ENCODE measurements at regions of chr7 and their contacts with region 1.

Region 1: DNA sequence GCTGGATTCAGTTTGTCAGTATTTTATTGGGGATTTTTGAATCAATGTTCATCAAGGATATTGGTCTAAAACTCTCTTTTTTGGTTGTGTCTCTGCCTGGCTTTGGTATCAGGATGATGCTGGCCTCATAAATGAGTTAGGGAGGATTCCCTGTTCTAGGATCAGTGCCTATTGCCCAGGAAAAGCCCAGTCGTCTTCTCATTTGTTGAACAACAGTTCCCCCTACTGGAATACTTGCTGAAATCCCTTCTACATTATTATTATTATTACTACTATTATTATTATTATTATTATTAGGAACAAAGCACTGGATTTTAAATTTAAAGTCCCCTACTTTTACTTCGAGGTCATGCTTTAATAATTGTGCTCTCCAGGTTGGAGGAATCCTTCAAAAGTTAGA is 528.9 kb downstream of the MAGI2 start:
- DNase-seq: no peak
- H3K4me3 ChIP-seq: no peak overlapping the region
- H3K27ac ChIP-seq: no peak overlapping the region
- H3K4me1 ChIP-seq: no peaks in the 10 kb centered on the region
- CTCF ChIP-seq: peak; percentile 40; the same call in 1 of the 2 replicates

Region 2: GRCh38 chr7:77995717-77996116 is 928.9 kb before region 1 on chr7:
- CTCF ChIA-PET with region 1: no interaction called
- POLR2A ChIA-PET with region 1: no interaction called
- intact Hi-C with region 1: no loop called
- DNase-seq: peak; percentile 14
- H3K4me3 ChIP-seq: no peak overlapping the region
- H3K27ac ChIP-seq: no peak overlapping the region
- H3K4me1 ChIP-seq: no peaks in the 10 kb centered on the region
- CTCF ChIP-seq: peak; percentile 55

Region 3: DNA sequence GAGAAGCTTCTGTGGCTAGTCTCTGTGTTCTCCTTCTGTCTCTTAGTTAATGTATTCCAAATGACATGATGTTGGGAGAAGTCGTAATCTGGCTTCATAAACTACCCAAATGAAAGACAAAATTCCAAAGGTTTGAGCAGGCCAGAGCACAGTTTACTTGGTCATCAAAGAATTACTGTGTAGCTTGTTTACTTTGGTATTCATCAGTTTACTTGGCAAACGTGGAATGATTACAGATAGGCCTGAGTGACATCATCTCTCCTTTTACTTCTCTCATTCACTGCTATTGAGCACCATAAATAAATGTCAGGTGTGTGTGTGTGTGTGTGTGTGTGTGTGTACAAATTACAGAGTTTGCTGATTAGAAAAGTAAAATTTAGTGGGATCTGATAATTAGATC is 798.7 kb before region 1 on chr7:
- CTCF ChIA-PET with region 1: no interaction called
- POLR2A ChIA-PET with region 1: no interaction called
- intact Hi-C with region 1: loop called (anchors 10 kb)
- DNase-seq: no peak
- H3K4me3 ChIP-seq: no peak overlapping the region
- H3K27ac ChIP-seq: no peak overlapping the region
- H3K4me1 ChIP-seq: no peaks in the 10 kb centered on the region
- CTCF ChIP-seq: no peak